Endothelial cell of umbilical vein (primary cell): ENCODE measurements at regions of chr12 and their contacts with region 1.

Region 1: DNA sequence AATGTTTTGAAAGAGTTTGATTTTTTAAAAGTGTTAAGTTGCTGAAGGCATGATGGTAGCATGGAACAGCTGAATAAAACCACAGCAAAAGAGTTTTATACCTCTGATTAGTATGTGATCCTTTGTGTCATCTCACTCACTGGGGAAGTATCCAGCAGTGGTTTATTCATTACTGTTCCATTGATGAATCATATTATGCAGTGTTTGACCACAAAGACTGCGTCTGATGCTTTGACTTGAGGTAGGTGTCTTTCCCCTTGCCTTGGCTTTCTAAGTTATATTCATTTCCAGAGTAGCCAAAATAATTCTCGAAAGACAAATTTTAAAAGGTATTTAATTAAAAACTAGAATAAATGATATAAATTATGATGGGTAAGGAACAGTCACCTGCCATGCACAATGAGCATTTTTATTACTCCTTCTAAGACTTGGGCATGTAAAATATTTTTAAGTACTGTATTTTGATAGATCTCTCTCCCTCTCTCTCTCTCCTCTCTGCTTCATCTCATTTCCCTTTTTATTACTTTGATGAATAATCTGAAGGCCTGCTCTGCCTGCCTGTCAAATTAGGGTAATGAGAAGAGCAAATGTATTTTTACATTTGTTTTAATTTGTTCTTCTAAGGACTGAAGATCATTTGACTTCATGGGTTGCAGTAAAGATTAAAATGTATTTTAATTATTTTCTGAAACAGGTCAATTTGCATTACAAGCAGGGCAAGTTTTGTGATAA is 164.9 kb downstream of the NAV3 start:
- DNase-seq: no peak
- H3K4me3 ChIP-seq: no peak overlapping the region
- H3K27ac ChIP-seq: no peak overlapping the region
- H3K4me1 ChIP-seq: no peaks in the 10 kb centered on the region
- H3K27me3 ChIP-seq: no peaks in the 10 kb centered on the region
- CTCF ChIP-seq: no peak
- POLR2A ChIP-seq: no peak

Region 2: GRCh38 chr12:77914081-77914488 is 81.5 kb before region 1 on chr12:
- CTCF ChIA-PET with region 1: no interaction called
- POLR2A ChIA-PET with region 1: no interaction called
- dilution Hi-C with region 1: no loop called
- intact Hi-C with region 1: no loop called
- DNase-seq: no peak
- H3K4me3 ChIP-seq: no peak overlapping the region
- H3K27ac ChIP-seq: no peak overlapping the region
- H3K4me1 ChIP-seq: no peaks in the 10 kb centered on the region
- H3K27me3 ChIP-seq: no peaks in the 10 kb centered on the region
- CTCF ChIP-seq: no peak
- POLR2A ChIP-seq: no peak

Region 3: DNA sequence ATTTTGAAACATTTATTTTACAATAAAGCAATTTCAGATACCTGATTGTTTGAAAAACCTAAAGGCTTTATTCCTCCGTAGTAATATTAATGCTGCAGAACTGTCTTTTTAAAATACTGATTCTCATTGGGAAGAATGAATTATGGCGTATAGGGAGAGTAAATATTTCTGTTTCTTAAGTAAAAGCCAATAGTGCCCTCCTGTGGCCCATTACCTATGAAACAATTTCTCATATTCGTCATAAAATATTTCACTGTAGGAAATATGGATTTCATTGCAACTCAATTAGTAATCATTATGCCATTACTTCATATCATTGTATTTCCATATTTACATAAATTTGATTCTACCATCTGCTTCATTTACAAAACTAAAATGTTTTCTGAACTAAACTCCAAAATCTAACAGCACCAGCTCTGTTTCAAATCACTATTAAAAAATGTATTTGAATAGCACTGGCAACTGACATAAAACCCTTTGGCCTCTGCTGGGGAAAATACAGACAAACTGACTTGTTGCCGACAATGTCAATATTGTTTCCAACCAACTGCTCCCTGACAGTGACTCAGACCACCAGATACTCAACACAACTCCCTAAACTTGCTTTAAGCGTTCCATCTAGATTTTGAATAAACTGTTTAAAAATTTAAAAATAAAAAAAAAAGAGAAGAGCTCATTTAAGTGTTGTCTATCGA is 125.4 kb after region 1 on chr12:
- CTCF ChIA-PET with region 1: interaction called, 16 read pairs
- POLR2A ChIA-PET with region 1: no interaction called
- dilution Hi-C with region 1: no loop called
- intact Hi-C with region 1: loop called (anchors 1 kb)
- DNase-seq: peak; percentile 49
- H3K4me3 ChIP-seq: no peak overlapping the region
- H3K27ac ChIP-seq: no peak overlapping the region
- H3K4me1 ChIP-seq: no peaks in the 10 kb centered on the region
- H3K27me3 ChIP-seq: no peaks in the 10 kb centered on the region
- CTCF ChIP-seq: no peak
- POLR2A ChIP-seq: no peak